Caco-2 (cell line): ENCODE measurements at regions of chr1 and their contacts with region 1.

Region 1: DNA sequence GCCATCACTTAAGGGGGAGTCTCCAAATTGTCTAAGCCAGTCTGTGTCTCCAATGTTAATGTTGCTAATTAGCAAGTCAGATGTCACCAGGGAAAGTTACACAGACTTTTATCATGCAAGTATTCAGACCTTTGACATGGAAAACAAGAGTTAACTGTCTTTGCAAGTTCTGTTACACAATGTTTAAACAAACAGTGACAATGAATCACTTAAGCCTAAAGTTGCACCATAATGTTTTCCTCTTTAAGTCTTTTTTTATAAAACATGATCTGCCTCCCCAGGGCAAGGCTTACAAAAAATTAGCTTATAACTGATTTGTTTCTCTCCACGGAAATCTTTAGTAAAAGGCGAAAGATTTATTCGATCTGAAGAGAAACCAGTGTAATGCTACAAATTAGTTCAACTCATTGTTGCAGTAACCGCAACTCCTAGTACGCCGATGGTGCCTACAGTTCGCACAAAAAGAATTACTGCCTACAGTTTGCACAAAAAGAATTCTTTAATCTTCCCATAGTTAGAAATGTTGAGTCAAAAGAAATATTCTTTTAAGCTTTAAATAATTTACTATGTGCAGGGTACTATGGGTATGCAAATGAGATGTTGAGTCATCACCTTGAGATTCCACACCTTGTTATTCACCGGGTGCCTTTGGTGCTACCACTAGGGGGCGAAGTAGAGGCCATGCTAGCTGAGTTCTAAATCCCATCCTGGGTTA is 45.3 kb downstream of the HHAT start:
- DNase-seq: peak; percentile 92 to 93
- H3K4me3 ChIP-seq: no peak overlapping the region
- H3K4me3 Mint-ChIP-seq: peak overlapping the region; percentile 44
- H3K27ac Mint-ChIP-seq: peak overlapping the region; percentile 96
- H3K4me1 ChIP-seq: peaks cover 10% of the 10 kb centered on the region
- H3K4me1 Mint-ChIP-seq: peaks cover 36% of the 10 kb centered on the region
- H3K27me3 ChIP-seq: no peaks in the 10 kb centered on the region
- H3K27me3 Mint-ChIP-seq: no peaks in the 10 kb centered on the region
- CTCF ChIP-seq: peak; percentile 88 to 94

Region 2: GRCh38 chr1:210170220-210170619 is 203.8 kb before region 1 on chr1:
- CTCF ChIA-PET with region 1: no interaction called
- POLR2A ChIA-PET with region 1: no interaction called
- intact Hi-C with region 1: no loop called
- DNase-seq: no peak
- H3K4me3 ChIP-seq: no peak overlapping the region
- H3K4me3 Mint-ChIP-seq: no peak overlapping the region
- H3K27ac Mint-ChIP-seq: no peak overlapping the region
- H3K4me1 ChIP-seq: peaks cover 19% of the 10 kb centered on the region
- H3K4me1 Mint-ChIP-seq: peaks cover 13% of the 10 kb centered on the region
- H3K27me3 ChIP-seq: no peaks in the 10 kb centered on the region
- H3K27me3 Mint-ChIP-seq: no peaks in the 10 kb centered on the region
- CTCF ChIP-seq: no peak

Region 3: GRCh38 chr1:210250998-210251679 is 122.9 kb before region 1 on chr1:
- CTCF ChIA-PET with region 1: no interaction called
- POLR2A ChIA-PET with region 1: interaction called, 5 read pairs
- intact Hi-C with region 1: loop called (anchors 5 kb)
- DNase-seq: peak; percentile 79 to 80
- H3K4me3 ChIP-seq: peak overlapping the region; percentile 46
- H3K4me3 Mint-ChIP-seq: peak overlapping the region; percentile 67
- H3K27ac Mint-ChIP-seq: peak overlapping the region; percentile 11
- H3K4me1 ChIP-seq: peaks cover 15% of the 10 kb centered on the region
- H3K4me1 Mint-ChIP-seq: peaks cover 10% of the 10 kb centered on the region
- H3K27me3 ChIP-seq: no peaks in the 10 kb centered on the region
- H3K27me3 Mint-ChIP-seq: peaks cover 4% of the 10 kb centered on the region
- CTCF ChIP-seq: no peak

Region 4: GRCh38 chr1:210360852-210361477 is 13.1 kb before region 1 on chr1:
- CTCF ChIA-PET with region 1: interaction called, 23 read pairs
- POLR2A ChIA-PET with region 1: interaction called, 14 read pairs
- intact Hi-C with region 1: no loop called
- DNase-seq: peak in 1 of 2 experiments; percentile 41
- H3K4me3 ChIP-seq: no peak overlapping the region
- H3K4me3 Mint-ChIP-seq: no peak overlapping the region
- H3K27ac Mint-ChIP-seq: no peak overlapping the region
- H3K4me1 ChIP-seq: peaks cover 1% of the 10 kb centered on the region; the same call in 1 of the 2 replicates
- H3K4me1 Mint-ChIP-seq: peaks cover 6% of the 10 kb centered on the region
- H3K27me3 ChIP-seq: no peaks in the 10 kb centered on the region
- H3K27me3 Mint-ChIP-seq: no peaks in the 10 kb centered on the region
- CTCF ChIP-seq: peak; percentile 54 to 74

Region 5: GRCh38 chr1:210384630-210385029 is 10.6 kb after region 1 on chr1:
- CTCF ChIA-PET with region 1: interaction called, 18 read pairs
- POLR2A ChIA-PET with region 1: interaction called, 10 read pairs
- intact Hi-C with region 1: loop called (anchors 1 kb)
- DNase-seq: no peak
- H3K4me3 ChIP-seq: no peak overlapping the region
- H3K4me3 Mint-ChIP-seq: no peak overlapping the region
- H3K27ac Mint-ChIP-seq: no peak overlapping the region
- H3K4me1 ChIP-seq: peaks cover 9% of the 10 kb centered on the region; the same call in 1 of the 2 replicates
- H3K4me1 Mint-ChIP-seq: peaks cover 10% of the 10 kb centered on the region
- H3K27me3 ChIP-seq: no peaks in the 10 kb centered on the region
- H3K27me3 Mint-ChIP-seq: no peaks in the 10 kb centered on the region
- CTCF ChIP-seq: no peak

Region 6: GRCh38 chr1:210400043-210400840 is 26.2 kb after region 1 on chr1:
- CTCF ChIA-PET with region 1: interaction called, 6 read pairs
- POLR2A ChIA-PET with region 1: no interaction called
- intact Hi-C with region 1: loop called (anchors 1 kb)
- DNase-seq: peak; percentile 71 to 79
- H3K4me3 ChIP-seq: no peak overlapping the region
- H3K4me3 Mint-ChIP-seq: no peak overlapping the region
- H3K27ac Mint-ChIP-seq: peak overlapping the region; percentile 62
- H3K4me1 ChIP-seq: no peaks in the 10 kb centered on the region
- H3K4me1 Mint-ChIP-seq: peaks cover 14% of the 10 kb centered on the region
- H3K27me3 ChIP-seq: no peaks in the 10 kb centered on the region
- H3K27me3 Mint-ChIP-seq: no peaks in the 10 kb centered on the region
- CTCF ChIP-seq: peak; percentile 83 to 92

Region 7: DNA sequence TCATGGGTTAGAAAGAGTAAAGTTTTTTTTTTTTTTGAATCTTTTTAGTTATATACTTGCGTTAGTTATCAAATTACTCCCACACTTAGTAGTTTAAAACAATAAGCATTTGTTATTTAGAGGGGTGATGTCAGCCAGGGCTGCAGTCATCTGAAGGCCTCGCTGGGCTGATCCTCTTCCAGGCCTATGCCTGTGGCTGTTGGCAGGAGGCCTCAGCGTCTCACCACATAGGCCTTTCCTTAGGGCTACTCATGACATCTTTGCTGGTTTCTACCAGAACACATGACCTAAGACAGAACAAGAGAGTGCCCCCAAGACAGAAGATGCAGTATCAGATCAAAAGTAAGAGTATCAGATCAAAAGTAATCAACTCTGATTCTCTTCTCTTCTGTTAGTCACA is 122.0 kb after region 1 on chr1:
- CTCF ChIA-PET with region 1: no interaction called
- POLR2A ChIA-PET with region 1: no interaction called
- intact Hi-C with region 1: no loop called
- DNase-seq: no peak
- H3K4me3 ChIP-seq: no peak overlapping the region
- H3K4me3 Mint-ChIP-seq: no peak overlapping the region
- H3K27ac Mint-ChIP-seq: no peak overlapping the region
- H3K4me1 ChIP-seq: no peaks in the 10 kb centered on the region
- H3K4me1 Mint-ChIP-seq: peaks cover 5% of the 10 kb centered on the region
- H3K27me3 ChIP-seq: no peaks in the 10 kb centered on the region
- H3K27me3 Mint-ChIP-seq: peaks cover 9% of the 10 kb centered on the region
- CTCF ChIP-seq: no peak

Region 8: GRCh38 chr1:211258756-211259637 is 885.0 kb after region 1 on chr1 and contains the start of gene RCOR3:
- CTCF ChIA-PET with region 1: no interaction called
- POLR2A ChIA-PET with region 1: no interaction called
- intact Hi-C with region 1: loop called (anchors 5 kb)
- DNase-seq: peak; percentile 95
- H3K4me3 ChIP-seq: peak within 1 kb of the TSS; percentile 79
- H3K4me3 Mint-ChIP-seq: peak within 1 kb of the TSS; percentile 83
- H3K27ac Mint-ChIP-seq: peak within 1 kb of the TSS; percentile 89
- H3K4me1 ChIP-seq: peaks cover 8% of the 10 kb centered on the region
- H3K4me1 Mint-ChIP-seq: peaks cover 9% of the 10 kb centered on the region
- H3K27me3 ChIP-seq: no peaks in the 10 kb centered on the region
- H3K27me3 Mint-ChIP-seq: no peaks in the 10 kb centered on the region
- CTCF ChIP-seq: peak; percentile 70 to 75
- total RNA-seq, gene RCOR3: 42.3 TPM in 2 replicates